WTC11 (cell line): ENCODE measurements at regions of chr12 and their contacts with region 1.

Region 1: GRCh38 chr12:54324617-54325441 is at the start of gene COPZ1:
- DNase-seq: peak; percentile 94
- ATAC-seq: peak; percentile 97
- H3K4me3 Mint-ChIP-seq: peak within 1 kb of the TSS; percentile 100
- H3K27ac Mint-ChIP-seq: peak within 1 kb of the TSS; percentile 98
- H3K4me1 Mint-ChIP-seq: peaks cover 24% of the 10 kb centered on the region
- H3K27me3 Mint-ChIP-seq: peaks cover 3% of the 10 kb centered on the region; the same call in 1 of the 2 replicates
- CTCF ChIP-seq: peak; percentile 84
- total RNA-seq, gene COPZ1: 98.2 to 116 TPM (median 115 TPM) in 3 replicates

Region 2: DNA sequence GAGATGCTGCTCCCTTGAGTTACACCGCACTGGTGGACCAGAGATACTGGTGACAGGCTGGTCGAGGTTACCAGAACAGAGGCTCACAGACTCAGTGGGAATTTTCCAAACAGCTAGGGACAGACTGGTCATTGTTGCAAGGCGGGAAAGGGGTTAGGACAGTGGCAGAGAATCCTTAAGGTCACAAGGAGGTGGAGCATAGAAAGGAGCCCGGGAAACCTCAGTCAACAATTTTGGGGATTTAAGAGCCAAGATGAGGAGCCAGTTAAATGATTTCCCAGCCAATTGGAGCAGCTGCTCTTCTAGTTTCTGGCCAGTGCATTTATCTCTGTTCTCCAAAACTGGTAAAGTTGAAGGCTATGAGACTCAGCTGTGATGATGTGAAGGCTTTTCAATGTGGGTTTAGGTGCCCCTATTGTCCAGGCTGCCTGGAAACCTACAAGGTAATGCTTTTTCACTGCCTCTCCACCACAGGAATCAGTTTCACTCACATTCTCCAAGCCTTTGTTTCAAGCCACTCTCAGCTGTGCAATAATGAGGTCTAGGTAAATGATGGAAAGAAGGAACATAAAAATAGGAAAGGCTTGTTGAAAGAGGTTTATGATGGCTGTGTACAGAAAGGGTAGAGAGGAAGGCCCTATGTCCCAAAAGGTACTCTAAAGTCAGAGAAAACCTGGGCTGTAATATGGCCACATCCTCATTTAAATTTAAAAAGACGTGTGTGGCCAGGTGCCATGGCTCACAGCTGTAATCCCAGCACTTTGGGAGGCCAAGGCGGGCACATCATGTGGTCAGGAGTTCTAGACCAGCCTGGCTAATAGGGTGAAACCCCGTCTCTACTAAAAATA is 1282.0 kb before region 1 on chr12:
- CTCF ChIA-PET with region 1: no interaction called
- POLR2A ChIA-PET with region 1: no interaction called
- DNase-seq: no peak
- ATAC-seq: peak; percentile 2
- H3K4me3 Mint-ChIP-seq: no peak overlapping the region
- H3K27ac Mint-ChIP-seq: peak overlapping the region; percentile 37
- H3K4me1 Mint-ChIP-seq: peaks cover 62% of the 10 kb centered on the region
- H3K27me3 Mint-ChIP-seq: peaks cover 40% of the 10 kb centered on the region
- CTCF ChIP-seq: no peak

Region 3: GRCh38 chr12:54214553-54215406 is 110.0 kb before region 1 on chr12:
- CTCF ChIA-PET with region 1: interaction called, 11 read pairs
- POLR2A ChIA-PET with region 1: no interaction called
- DNase-seq: peak; percentile 97
- ATAC-seq: peak; percentile 71
- H3K4me3 Mint-ChIP-seq: peak overlapping the region; percentile 16; the same call in 1 of the 2 replicates
- H3K27ac Mint-ChIP-seq: no peak overlapping the region
- H3K4me1 Mint-ChIP-seq: peaks cover 33% of the 10 kb centered on the region
- H3K27me3 Mint-ChIP-seq: peaks cover 79% of the 10 kb centered on the region
- CTCF ChIP-seq: peak; percentile 96

Region 4: DNA sequence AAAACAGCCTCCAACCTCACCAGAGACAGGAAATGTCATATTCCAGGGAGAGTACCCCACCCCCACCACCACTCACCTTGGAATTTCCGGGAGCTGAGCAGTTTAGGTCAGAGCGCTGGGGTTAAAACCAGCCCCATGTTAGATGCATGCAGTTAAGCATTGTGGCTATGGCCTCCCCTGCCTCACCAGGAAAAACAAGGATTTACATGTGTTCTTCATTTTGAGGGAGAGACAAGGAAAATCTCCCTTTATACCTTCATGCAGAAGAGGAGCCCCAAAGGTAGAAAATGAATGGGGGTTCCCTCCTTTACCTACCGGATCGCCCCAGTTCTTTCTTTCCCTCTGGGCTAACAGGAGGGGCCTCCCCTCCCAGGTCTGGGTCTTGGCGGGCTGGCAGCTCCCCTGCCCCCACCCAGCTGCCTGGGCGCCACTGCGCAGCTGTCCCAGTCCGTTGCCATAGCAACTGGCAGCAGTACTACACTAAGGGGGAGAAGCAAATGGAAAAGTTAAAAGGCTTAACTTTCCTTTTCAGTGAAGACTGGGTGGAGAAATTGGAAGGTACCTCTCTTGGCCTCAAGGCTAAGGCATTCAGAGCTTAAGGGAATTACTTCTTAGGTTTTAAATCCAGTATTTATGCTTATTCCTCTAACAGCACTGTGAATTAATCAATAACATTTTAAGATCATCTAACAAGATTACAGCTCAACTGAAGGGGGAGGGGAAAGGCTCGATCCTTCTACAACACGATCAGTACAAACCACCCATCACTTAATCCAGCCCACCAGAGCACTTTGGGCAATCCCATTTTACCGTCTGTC is 65.4 kb before region 1 on chr12:
- CTCF ChIA-PET with region 1: interaction called, 25 read pairs
- POLR2A ChIA-PET with region 1: interaction called, 8 read pairs
- DNase-seq: peak; percentile 91
- ATAC-seq: peak; percentile 94
- H3K4me3 Mint-ChIP-seq: peak overlapping the region; percentile 66
- H3K27ac Mint-ChIP-seq: peak overlapping the region; percentile 99
- H3K4me1 Mint-ChIP-seq: peaks cover 63% of the 10 kb centered on the region
- H3K27me3 Mint-ChIP-seq: no peaks in the 10 kb centered on the region
- CTCF ChIP-seq: no peak

Region 5: GRCh38 chr12:54285150-54286041 is 39.4 kb before region 1 on chr12:
- CTCF ChIA-PET with region 1: interaction called, 130 read pairs
- POLR2A ChIA-PET with region 1: interaction called, 21 read pairs
- DNase-seq: no peak
- ATAC-seq: no peak
- H3K4me3 Mint-ChIP-seq: peak overlapping the region; percentile 10
- H3K27ac Mint-ChIP-seq: peak overlapping the region; percentile 81
- H3K4me1 Mint-ChIP-seq: peaks cover 41% of the 10 kb centered on the region
- H3K27me3 Mint-ChIP-seq: no peaks in the 10 kb centered on the region
- CTCF ChIP-seq: no peak

Region 6: GRCh38 chr12:54300732-54301427 is 23.9 kb before region 1 on chr12 and contains the start of gene NFE2:
- CTCF ChIA-PET with region 1: interaction called, 130 read pairs
- POLR2A ChIA-PET with region 1: interaction called, 6 read pairs
- DNase-seq: peak; percentile 86
- ATAC-seq: peak; percentile 94
- H3K4me3 Mint-ChIP-seq: peak within 1 kb of the TSS; percentile 68
- H3K27ac Mint-ChIP-seq: peak within 1 kb of the TSS; percentile 90
- H3K4me1 Mint-ChIP-seq: peaks cover 53% of the 10 kb centered on the region
- H3K27me3 Mint-ChIP-seq: peaks cover 15% of the 10 kb centered on the region
- CTCF ChIP-seq: no peak
- total RNA-seq, gene NFE2: 2.4 to 3.0 TPM (median 3.0 TPM) in 3 replicates

Region 7: DNA sequence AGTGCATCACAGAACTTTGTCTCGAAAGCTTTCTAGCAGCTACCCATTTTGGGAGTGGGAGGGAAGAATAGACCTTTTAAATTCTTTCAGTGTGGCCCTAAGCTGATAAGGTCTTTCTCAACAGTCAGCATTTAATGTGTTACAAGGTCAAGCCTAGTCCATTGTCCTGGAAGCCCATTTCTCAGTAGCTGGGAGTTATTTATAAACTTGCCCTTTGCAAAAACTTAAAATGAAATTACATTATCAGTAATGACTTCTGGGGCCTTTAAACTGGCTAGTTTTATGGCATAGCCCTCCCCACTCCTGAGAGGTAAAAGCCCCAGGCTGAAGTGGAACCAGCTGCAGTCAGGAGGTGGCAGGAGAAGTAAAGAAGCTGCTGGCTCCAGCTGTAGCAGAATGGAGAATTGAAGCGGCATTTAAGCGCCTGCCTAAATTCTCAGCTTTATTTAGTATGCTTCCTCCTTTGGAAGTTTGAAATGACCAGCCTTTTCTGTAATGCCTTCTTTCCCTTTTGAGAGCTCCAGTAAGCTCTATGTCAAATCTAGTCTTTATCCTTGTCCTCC is 12.5 kb after region 1 on chr12:
- CTCF ChIA-PET with region 1: interaction called, 96 read pairs
- POLR2A ChIA-PET with region 1: interaction called, 7 read pairs
- DNase-seq: no peak
- ATAC-seq: no peak
- H3K4me3 Mint-ChIP-seq: no peak overlapping the region
- H3K27ac Mint-ChIP-seq: no peak overlapping the region
- H3K4me1 Mint-ChIP-seq: peaks cover 5% of the 10 kb centered on the region
- H3K27me3 Mint-ChIP-seq: no peaks in the 10 kb centered on the region
- CTCF ChIP-seq: no peak

Region 8: GRCh38 chr12:54359033-54359761 is 34.4 kb after region 1 on chr12:
- CTCF ChIA-PET with region 1: interaction called, 75 read pairs
- POLR2A ChIA-PET with region 1: interaction called, 3 read pairs
- DNase-seq: peak; percentile 96
- ATAC-seq: peak; percentile 77
- H3K4me3 Mint-ChIP-seq: no peak overlapping the region
- H3K27ac Mint-ChIP-seq: no peak overlapping the region
- H3K4me1 Mint-ChIP-seq: peaks cover 7% of the 10 kb centered on the region
- H3K27me3 Mint-ChIP-seq: peaks cover 8% of the 10 kb centered on the region
- CTCF ChIP-seq: no peak

Region 9: DNA sequence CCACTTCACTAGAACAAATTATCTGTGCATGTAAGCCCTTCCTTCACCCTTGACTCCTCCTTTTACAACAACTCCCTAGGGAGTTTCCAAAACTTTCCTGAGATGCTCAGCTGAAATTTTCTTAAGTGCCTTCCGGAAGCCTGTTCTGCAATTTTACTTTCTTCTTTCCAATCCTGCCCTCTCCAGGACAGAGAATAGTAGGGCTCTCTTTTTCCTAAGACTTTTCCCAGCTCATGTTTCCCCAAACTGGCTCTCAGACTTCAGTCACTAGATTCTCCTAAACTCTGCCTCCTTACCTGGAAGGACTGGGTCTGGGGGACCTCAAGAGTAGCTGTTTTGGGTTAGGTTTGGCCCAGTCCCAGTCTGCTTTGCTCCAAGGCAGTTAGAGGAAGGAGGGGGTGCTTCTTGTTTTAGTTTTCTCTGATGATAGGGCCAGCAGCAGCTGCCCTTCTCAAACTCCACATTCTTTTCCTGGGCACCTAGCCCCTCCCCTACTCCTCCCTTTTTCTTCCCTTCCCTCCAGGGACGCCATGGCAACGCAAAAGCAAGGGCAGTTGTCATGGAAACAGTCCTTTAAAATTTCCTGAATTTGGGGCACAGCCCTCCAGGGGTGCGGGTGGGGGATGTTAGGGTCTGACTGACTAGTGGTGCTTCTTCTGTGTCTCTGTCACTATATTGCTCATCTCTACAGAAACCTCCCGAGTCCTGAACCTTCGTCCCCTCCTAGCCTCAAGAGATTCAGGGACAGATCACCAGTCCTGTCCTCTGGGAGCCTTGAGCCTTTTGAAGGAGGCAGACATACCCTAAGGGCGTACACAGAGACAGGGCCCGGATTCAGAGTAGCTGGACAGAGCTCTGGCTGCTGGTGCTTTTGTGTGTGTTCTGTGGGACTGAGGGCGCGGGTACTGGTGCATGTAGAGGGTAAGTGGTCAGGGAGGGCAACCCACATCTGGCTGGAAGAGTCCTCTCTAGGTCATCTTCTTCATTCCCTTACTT is 246.7 kb after region 1 on chr12:
- CTCF ChIA-PET with region 1: no interaction called
- POLR2A ChIA-PET with region 1: no interaction called
- DNase-seq: peak; percentile 54
- ATAC-seq: peak; percentile 54
- H3K4me3 Mint-ChIP-seq: no peak overlapping the region
- H3K27ac Mint-ChIP-seq: no peak overlapping the region
- H3K4me1 Mint-ChIP-seq: peaks cover 28% of the 10 kb centered on the region
- H3K27me3 Mint-ChIP-seq: peaks cover 67% of the 10 kb centered on the region
- CTCF ChIP-seq: no peak